Esophagus muscularis mucosa (tissue), 4 donors: ENCODE measurements at regions of chr14 and their contacts with region 1.

Region 1: GRCh38 chr14:75794615-75795038 is 133.6 kb downstream of the TTLL5 start:
- DNase-seq: no peak
- H3K4me3 ChIP-seq: no peak overlapping the region
- H3K27ac ChIP-seq: peak overlapping the region in 1 of 4 donors; percentile 33
- H3K4me1 ChIP-seq: peaks cover 0 to 12% (median 5%) of the 10 kb centered on the region in 4 donors
- H3K27me3 ChIP-seq: no peaks in the 10 kb centered on the region
- CTCF ChIP-seq: peak; percentile 51 to 62 (median 53)
- EP300 ChIP-seq: no peak
- POLR2A ChIP-seq: no peak

Region 2: DNA sequence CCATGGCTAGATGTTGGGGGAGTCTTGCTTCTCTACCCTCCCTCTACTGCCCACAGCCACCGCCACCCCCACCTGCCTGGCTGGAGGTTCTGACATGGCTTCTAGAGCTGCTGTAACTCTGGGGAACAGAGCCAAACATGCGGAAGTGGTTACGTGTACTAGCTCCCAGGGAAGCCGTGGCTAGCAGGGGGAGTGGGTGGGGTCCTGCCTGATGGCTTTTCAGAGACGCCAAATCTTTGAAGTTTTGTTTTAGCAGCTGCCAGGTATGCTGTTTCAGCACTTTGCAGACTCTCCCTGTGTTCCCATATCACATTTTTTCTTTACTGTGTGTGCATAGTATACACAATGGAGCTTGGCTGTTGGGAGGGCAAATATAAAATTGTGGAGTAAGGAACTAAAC is 36.8 kb after region 1 on chr14:
- intact Hi-C with region 1: no loop called
- DNase-seq: no peak
- H3K4me3 ChIP-seq: no peak overlapping the region
- H3K27ac ChIP-seq: peak overlapping the region; percentile 38 to 65 (median 53)
- H3K4me1 ChIP-seq: peaks cover 4 to 33% (median 28%) of the 10 kb centered on the region in 4 donors
- H3K27me3 ChIP-seq: no peaks in the 10 kb centered on the region
- CTCF ChIP-seq: no peak
- EP300 ChIP-seq: no peak
- POLR2A ChIP-seq: no peak

Region 3: GRCh38 chr14:75982266-75983018 is 187.8 kb after region 1 on chr14:
- intact Hi-C with region 1: loop called (anchors 5 kb)
- DNase-seq: peak; percentile 98
- H3K4me3 ChIP-seq: peak overlapping the region; percentile 75 to 92 (median 80)
- H3K27ac ChIP-seq: peak overlapping the region; percentile 96 to 99 (median 98)
- H3K4me1 ChIP-seq: peaks cover 45 to 74% (median 71%) of the 10 kb centered on the region in 4 donors
- H3K27me3 ChIP-seq: no peaks in the 10 kb centered on the region
- CTCF ChIP-seq: peak; percentile 51 to 85 (median 80)
- EP300 ChIP-seq: no peak
- POLR2A ChIP-seq: no peak